Activated CD8-positive, alpha-beta T cell treated with anti-CD3 and anti-CD28 coated beads for 36 hours (primary cell): ENCODE measurements at regions of chr12 and their contacts with region 1.

Region 1: DNA sequence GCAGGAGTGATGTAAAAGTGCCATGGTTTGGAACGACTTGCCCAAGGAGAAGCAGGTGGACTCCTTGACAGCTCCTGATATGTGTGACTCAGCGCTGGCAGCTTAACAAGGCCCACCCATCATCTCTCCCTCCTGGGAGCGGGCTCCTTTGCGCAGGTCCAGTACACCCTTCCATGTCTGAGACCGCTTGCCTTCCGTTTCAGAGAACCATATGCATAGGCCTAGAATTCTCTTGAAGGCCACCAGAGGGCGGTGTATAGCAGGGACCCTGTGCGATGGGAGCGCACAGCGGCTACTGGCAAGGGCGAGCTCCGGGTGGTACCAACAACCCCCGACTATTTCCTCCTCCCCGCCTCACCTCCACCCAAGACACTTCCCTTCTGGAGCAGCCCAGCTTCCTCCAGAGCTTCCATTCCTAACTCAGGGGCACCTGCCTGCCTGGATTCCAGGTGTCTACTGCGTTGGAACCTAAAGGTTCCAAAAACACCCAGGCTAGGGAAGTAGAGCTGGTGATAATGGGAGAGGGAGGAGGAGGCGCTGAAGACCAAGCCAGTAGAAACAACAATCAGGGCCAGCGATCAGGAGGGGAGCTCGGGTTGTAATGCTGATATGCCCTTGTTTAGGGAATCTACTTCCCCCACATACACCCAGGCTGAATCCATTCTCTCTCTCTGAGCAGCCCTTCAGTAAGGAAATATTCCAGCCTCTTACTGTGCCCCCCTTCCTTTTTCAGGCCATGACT is 6.2 kb downstream of the DHH start:
- DNase-seq: peak; percentile 81
- ATAC-seq: peak; percentile 95
- H3K4me3 Mint-ChIP-seq: no peak overlapping the region
- H3K27ac Mint-ChIP-seq: no peak overlapping the region
- H3K4me1 Mint-ChIP-seq: peaks cover 43% of the 10 kb centered on the region
- H3K27me3 Mint-ChIP-seq: peaks cover 46% of the 10 kb centered on the region
- CTCF ChIP-seq: peak; percentile 88

Region 2: GRCh38 chr12:48814262-48815125 is 273.9 kb before region 1 on chr12:
- CTCF ChIA-PET with region 1: no interaction called
- POLR2A ChIA-PET with region 1: no interaction called
- intact Hi-C with region 1: no loop called
- DNase-seq: peak; percentile 86
- ATAC-seq: peak; percentile 83
- H3K4me3 Mint-ChIP-seq: peak overlapping the region; percentile 95
- H3K27ac Mint-ChIP-seq: peak overlapping the region; percentile 67
- H3K4me1 Mint-ChIP-seq: peaks cover 34% of the 10 kb centered on the region
- H3K27me3 Mint-ChIP-seq: peaks cover 19% of the 10 kb centered on the region
- CTCF ChIP-seq: peak; percentile 100

Region 3: GRCh38 chr12:48995061-48995879 is 93.1 kb before region 1 on chr12:
- CTCF ChIA-PET with region 1: interaction called, 33 read pairs
- POLR2A ChIA-PET with region 1: interaction called, 5 read pairs
- intact Hi-C with region 1: loop called (anchors 5 kb)
- DNase-seq: peak; percentile 71
- ATAC-seq: no peak
- H3K4me3 Mint-ChIP-seq: no peak overlapping the region
- H3K27ac Mint-ChIP-seq: no peak overlapping the region
- H3K4me1 Mint-ChIP-seq: peaks cover 24% of the 10 kb centered on the region
- H3K27me3 Mint-ChIP-seq: peaks cover 39% of the 10 kb centered on the region
- CTCF ChIP-seq: peak; percentile 84

Region 4: GRCh38 chr12:49060237-49061156 is 27.9 kb before region 1 on chr12 and contains the start of gene KMT2D:
- CTCF ChIA-PET with region 1: interaction called, 220 read pairs
- POLR2A ChIA-PET with region 1: interaction called, 10 read pairs
- intact Hi-C with region 1: no loop called
- DNase-seq: peak; percentile 92
- ATAC-seq: peak; percentile 76
- H3K4me3 Mint-ChIP-seq: peak within 1 kb of the TSS; percentile 97
- H3K27ac Mint-ChIP-seq: peak within 1 kb of the TSS; percentile 98
- H3K4me1 Mint-ChIP-seq: peaks cover 39% of the 10 kb centered on the region
- H3K27me3 Mint-ChIP-seq: no peaks in the 10 kb centered on the region
- CTCF ChIP-seq: no peak
- total RNA-seq, gene KMT2D: 57.5 to 62.3 TPM

Region 5: GRCh38 chr12:49110464-49111155 is 22.2 kb after region 1 on chr12 and contains the start of gene LMBR1L:
- CTCF ChIA-PET with region 1: interaction called, 96 read pairs
- POLR2A ChIA-PET with region 1: no interaction called
- intact Hi-C with region 1: no loop called
- DNase-seq: peak; percentile 99
- ATAC-seq: peak; percentile 99
- H3K4me3 Mint-ChIP-seq: peak within 1 kb of the TSS; percentile 87
- H3K27ac Mint-ChIP-seq: peak within 1 kb of the TSS; percentile 97
- H3K4me1 Mint-ChIP-seq: peaks cover 35% of the 10 kb centered on the region
- H3K27me3 Mint-ChIP-seq: no peaks in the 10 kb centered on the region
- CTCF ChIP-seq: peak; percentile 50
- total RNA-seq, gene LMBR1L: 43.5 to 50.9 TPM

Region 6: DNA sequence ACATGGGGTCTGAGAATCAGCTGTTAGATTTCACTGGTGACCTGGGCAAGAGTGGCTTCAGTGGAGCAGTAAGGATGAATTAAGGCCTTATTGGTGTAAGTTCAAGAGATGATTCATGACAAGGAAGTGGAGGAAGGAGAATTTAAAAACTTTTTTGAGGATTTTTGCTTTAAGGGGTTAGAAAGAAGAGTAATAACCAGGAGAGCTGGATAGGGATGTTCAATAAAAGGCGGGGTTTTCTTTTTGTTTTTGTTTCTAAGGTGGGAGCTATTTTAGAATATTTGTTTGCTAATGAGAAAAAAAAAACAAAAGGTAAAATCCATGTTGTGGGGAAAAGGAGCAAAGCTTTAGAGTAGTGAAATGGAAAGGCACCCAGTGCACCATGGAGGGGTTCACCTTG is 58.0 kb after region 1 on chr12:
- CTCF ChIA-PET with region 1: interaction called, 11 read pairs
- POLR2A ChIA-PET with region 1: no interaction called
- intact Hi-C with region 1: no loop called
- DNase-seq: no peak
- ATAC-seq: no peak
- H3K4me3 Mint-ChIP-seq: no peak overlapping the region
- H3K27ac Mint-ChIP-seq: no peak overlapping the region
- H3K4me1 Mint-ChIP-seq: peaks cover 2% of the 10 kb centered on the region
- H3K27me3 Mint-ChIP-seq: no peaks in the 10 kb centered on the region
- CTCF ChIP-seq: no peak

Region 7: DNA sequence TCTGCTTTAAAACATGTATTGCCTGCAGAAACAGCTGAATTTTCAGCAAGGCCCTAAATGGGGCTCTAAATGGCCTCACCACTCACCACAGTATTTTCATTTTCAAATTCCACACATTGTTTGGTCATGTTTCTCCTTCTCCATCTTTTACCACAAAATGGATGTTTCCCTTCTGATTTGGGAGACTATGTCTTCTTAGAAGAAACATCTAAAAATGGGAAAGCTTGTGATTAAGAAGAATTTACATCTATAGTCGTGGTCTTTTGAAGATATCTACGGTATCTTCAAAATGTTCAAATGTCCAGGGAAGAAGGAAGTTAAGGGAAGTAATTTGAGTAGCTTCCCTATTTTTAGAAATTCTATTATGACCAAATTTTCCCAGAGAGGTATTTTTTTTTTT is 155.8 kb after region 1 on chr12:
- CTCF ChIA-PET with region 1: interaction called, 11 read pairs
- POLR2A ChIA-PET with region 1: interaction called, 3 read pairs
- intact Hi-C with region 1: loop called (anchors 10 kb)
- DNase-seq: no peak
- ATAC-seq: no peak
- H3K4me3 Mint-ChIP-seq: no peak overlapping the region
- H3K27ac Mint-ChIP-seq: no peak overlapping the region
- H3K4me1 Mint-ChIP-seq: no peaks in the 10 kb centered on the region
- H3K27me3 Mint-ChIP-seq: no peaks in the 10 kb centered on the region
- CTCF ChIP-seq: no peak